CD8-positive, alpha-beta T cell (primary cell): ENCODE measurements at regions of chr3 and their contacts with region 1.

Region 1: DNA sequence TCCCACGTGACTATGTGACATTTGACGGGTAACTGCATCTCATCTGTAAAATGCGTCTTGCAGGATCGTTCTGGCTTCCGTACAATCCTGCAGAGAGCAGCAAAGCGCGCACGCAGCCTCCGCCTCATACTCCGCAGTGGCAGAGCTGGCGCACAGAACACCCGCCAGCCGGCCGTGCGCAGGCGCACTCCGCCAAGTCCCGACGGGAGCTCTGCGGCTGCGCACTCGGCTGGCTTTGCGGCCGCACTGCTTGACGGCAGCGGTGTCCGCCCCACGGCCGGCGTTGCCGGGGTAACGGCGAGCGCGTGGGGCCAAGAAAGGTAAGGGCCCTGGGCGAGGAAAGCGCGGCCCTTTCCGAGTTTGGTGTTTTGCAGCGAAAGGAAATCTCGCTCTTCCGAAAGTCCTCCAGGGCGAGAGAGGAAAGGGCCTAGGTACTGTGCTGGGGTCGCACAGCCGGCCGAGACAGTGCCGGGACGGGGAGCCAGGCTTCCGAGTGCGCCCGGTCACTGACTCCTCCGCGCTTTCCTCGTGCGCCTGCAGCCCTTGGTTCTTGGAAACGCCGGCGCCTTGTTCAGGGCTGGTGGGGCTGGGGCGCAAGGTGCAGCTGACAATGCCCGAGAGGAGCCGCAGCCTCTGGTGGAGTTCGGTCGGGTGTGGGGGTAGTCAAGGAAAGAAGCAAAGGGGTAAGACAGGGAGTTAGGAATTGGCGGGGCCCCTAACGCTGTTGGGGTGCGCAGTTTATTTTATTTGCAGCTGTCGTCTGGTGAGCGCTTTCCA is at the start of gene TSEN2:
- DNase-seq: peak; percentile 93 to 99 (median 96)
- ATAC-seq: peak; percentile 95
- H3K4me3 ChIP-seq: peak within 1 kb of the TSS; percentile 64 to 72
- H3K4me3 Mint-ChIP-seq: peak within 1 kb of the TSS; percentile 93
- H3K27ac ChIP-seq: peak within 1 kb of the TSS; percentile 76 to 83
- H3K27ac Mint-ChIP-seq: peak within 1 kb of the TSS; percentile 98
- H3K4me1 ChIP-seq: peaks cover 17% of the 10 kb centered on the region
- H3K4me1 Mint-ChIP-seq: peaks cover 37% of the 10 kb centered on the region
- H3K27me3 ChIP-seq: no peaks in the 10 kb centered on the region
- H3K27me3 Mint-ChIP-seq: no peaks in the 10 kb centered on the region
- CTCF ChIP-seq: no peak
- total RNA-seq, gene TSEN2: 5.1 to 6.1 TPM

Region 2: DNA sequence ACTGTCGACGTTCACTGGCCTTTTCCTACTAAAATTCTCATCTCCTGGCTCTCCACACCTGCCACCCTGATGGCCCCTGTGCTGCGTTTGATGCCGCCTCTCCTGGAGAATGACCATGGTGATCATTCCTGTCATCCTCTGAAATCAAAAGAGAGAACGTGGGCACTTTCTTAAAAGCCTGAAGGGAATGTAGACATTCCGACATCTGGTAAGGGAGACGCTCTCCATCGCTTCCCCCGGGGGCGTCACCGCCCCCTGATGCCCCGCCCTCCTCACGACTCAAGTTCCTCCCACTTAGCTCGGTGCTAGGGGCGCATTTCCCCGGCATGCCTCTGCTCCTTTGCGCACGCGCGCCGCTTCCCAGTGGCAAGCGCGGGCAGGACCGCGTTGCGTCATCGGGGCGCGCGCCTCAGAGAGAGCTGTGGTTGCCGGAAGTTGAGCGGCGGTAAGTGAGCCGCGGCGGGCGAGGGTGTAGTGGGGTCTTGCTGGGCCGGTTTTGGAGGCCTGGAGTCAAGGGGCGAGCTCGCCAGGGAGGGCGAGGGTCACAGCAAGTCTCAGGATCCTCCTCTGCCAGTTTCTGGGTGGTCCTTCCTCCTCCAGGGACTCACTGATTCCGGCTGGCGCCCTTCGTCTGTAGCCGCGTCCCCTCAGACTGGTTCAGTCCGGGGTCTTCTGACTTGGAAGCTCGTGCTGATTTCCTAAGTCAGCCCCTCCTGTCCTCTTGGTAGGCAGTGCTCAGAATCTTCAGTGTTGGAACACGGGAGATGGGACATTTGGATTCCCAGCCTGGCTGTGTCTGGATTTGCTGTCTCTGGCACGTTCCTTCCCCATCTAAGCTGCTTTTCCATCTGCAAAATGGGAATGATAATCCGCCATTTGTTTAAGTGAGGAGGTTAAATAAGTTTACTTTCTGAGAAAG is 1212.1 kb before region 1 on chr3 and contains the start of gene ATG7:
- CTCF ChIA-PET with region 1: no interaction called
- POLR2A ChIA-PET with region 1: no interaction called
- intact Hi-C with region 1: loop called (anchors 5 kb)
- DNase-seq: peak; percentile 94 to 98 (median 97)
- ATAC-seq: peak; percentile 98
- H3K4me3 ChIP-seq: peak within 1 kb of the TSS; percentile 77 to 96
- H3K4me3 Mint-ChIP-seq: peak within 1 kb of the TSS; percentile 96
- H3K27ac ChIP-seq: peak within 1 kb of the TSS; percentile 94 to 97
- H3K27ac Mint-ChIP-seq: peak within 1 kb of the TSS; percentile 99
- H3K4me1 ChIP-seq: peaks cover 23% of the 10 kb centered on the region
- H3K4me1 Mint-ChIP-seq: peaks cover 52% of the 10 kb centered on the region
- H3K27me3 ChIP-seq: no peaks in the 10 kb centered on the region
- H3K27me3 Mint-ChIP-seq: no peaks in the 10 kb centered on the region
- CTCF ChIP-seq: no peak
- total RNA-seq, gene ATG7: 21.3 to 23.8 TPM

Region 3: DNA sequence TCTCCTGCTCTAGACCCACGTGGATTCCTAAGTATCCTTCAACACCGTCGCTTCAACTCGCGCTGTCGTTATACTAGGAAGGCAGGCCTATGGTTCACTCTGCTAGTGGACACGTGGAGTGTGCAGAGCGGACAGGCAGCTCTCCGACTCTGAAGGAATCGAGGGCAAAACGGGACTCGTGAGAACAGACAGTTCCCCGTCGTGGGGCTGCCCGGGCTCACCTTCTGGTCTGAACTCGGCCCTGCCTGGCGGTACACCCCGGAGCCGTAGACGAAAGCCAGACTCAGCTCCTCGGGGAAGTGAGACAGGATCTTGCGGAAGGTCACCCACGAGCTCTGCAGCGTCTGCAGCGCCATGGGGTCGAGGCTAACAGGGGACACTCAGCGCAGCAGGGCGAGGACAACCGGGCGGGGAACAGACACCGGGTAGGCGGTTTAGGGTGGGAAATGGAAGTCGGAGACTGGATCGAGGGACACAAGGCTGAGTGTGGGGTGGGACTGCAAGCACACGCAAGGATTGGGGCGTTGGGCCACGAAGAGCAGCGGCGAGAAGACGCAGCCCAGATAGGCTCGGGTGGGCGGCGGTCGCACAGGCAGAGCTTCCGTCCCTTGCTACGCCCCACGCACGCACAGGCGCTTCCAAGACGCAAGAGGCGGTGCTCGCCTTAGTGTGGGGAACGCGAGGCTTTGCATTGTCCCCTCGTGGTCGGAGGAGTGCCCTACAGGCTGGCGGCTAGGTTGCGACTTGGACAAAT is 637.9 kb before region 1 on chr3 and contains the start of gene TAMM41:
- CTCF ChIA-PET with region 1: interaction called, 4 read pairs
- POLR2A ChIA-PET with region 1: interaction called, 3 read pairs
- intact Hi-C with region 1: loop called (anchors 2 kb)
- DNase-seq: peak; percentile 77 to 94 (median 89)
- ATAC-seq: peak; percentile 99
- H3K4me3 ChIP-seq: peak within 1 kb of the TSS; percentile 91 to 92
- H3K4me3 Mint-ChIP-seq: peak within 1 kb of the TSS; percentile 99
- H3K27ac ChIP-seq: peak within 1 kb of the TSS; percentile 80 to 88
- H3K27ac Mint-ChIP-seq: peak within 1 kb of the TSS; percentile 97
- H3K4me1 ChIP-seq: peaks cover 28% of the 10 kb centered on the region
- H3K4me1 Mint-ChIP-seq: peaks cover 52% of the 10 kb centered on the region
- H3K27me3 ChIP-seq: no peaks in the 10 kb centered on the region
- H3K27me3 Mint-ChIP-seq: no peaks in the 10 kb centered on the region
- CTCF ChIP-seq: peak; percentile 62
- total RNA-seq, gene TAMM41: 16.2 to 18.5 TPM

Region 4: GRCh38 chr3:12462159-12462947 is 22.0 kb before region 1 on chr3:
- CTCF ChIA-PET with region 1: interaction called, 24 read pairs
- POLR2A ChIA-PET with region 1: interaction called, 3 read pairs
- intact Hi-C with region 1: no loop called
- DNase-seq: peak in 6 of 9 experiments; percentile 12 to 60 (median 24)
- ATAC-seq: peak; percentile 68
- H3K4me3 ChIP-seq: no peak overlapping the region
- H3K4me3 Mint-ChIP-seq: peak overlapping the region; percentile 59
- H3K27ac ChIP-seq: no peak overlapping the region
- H3K27ac Mint-ChIP-seq: peak overlapping the region; percentile 72
- H3K4me1 ChIP-seq: peaks cover 10% of the 10 kb centered on the region
- H3K4me1 Mint-ChIP-seq: peaks cover 12% of the 10 kb centered on the region
- H3K27me3 ChIP-seq: no peaks in the 10 kb centered on the region
- H3K27me3 Mint-ChIP-seq: no peaks in the 10 kb centered on the region
- CTCF ChIP-seq: no peak

Region 5: GRCh38 chr3:12663936-12664908 is 179.8 kb after region 1 on chr3 and contains the start of gene RAF1:
- CTCF ChIA-PET with region 1: no interaction called
- POLR2A ChIA-PET with region 1: interaction called, 5 read pairs
- intact Hi-C with region 1: loop called (anchors 1 to 5 kb)
- DNase-seq: peak; percentile 94 to 99 (median 97)
- ATAC-seq: peak; percentile 93
- H3K4me3 ChIP-seq: peak within 1 kb of the TSS; percentile 83 to 93
- H3K4me3 Mint-ChIP-seq: peak within 1 kb of the TSS; percentile 90
- H3K27ac ChIP-seq: peak within 1 kb of the TSS; percentile 96 to 99
- H3K27ac Mint-ChIP-seq: peak within 1 kb of the TSS; percentile 99
- H3K4me1 ChIP-seq: peaks cover 30% of the 10 kb centered on the region
- H3K4me1 Mint-ChIP-seq: peaks cover 34% of the 10 kb centered on the region
- H3K27me3 ChIP-seq: no peaks in the 10 kb centered on the region
- H3K27me3 Mint-ChIP-seq: no peaks in the 10 kb centered on the region
- CTCF ChIP-seq: no peak
- total RNA-seq, gene RAF1: 156 to 159 TPM

Region 6: GRCh38 chr3:12967606-12968351 is 483.4 kb after region 1 on chr3:
- CTCF ChIA-PET with region 1: no interaction called
- POLR2A ChIA-PET with region 1: no interaction called
- intact Hi-C with region 1: loop called in 1 of 2 experiments (anchors 5 kb)
- DNase-seq: peak; percentile 82 to 95 (median 89)
- ATAC-seq: peak; percentile 97
- H3K4me3 ChIP-seq: peak overlapping the region; percentile 42 to 63
- H3K4me3 Mint-ChIP-seq: peak overlapping the region; percentile 82
- H3K27ac ChIP-seq: no peak overlapping the region
- H3K27ac Mint-ChIP-seq: peak overlapping the region; percentile 69
- H3K4me1 ChIP-seq: peaks cover 59% of the 10 kb centered on the region
- H3K4me1 Mint-ChIP-seq: peaks cover 74% of the 10 kb centered on the region
- H3K27me3 ChIP-seq: no peaks in the 10 kb centered on the region
- H3K27me3 Mint-ChIP-seq: no peaks in the 10 kb centered on the region
- CTCF ChIP-seq: no peak